B cell (primary cell): ENCODE measurements at regions of chr2 and their contacts with region 1.

Region 1: GRCh38 chr2:22340716-22341115 is 1044.3 kb upstream of the KLHL29 start:
- DNase-seq: no peak
- ATAC-seq: no peak
- H3K4me3 ChIP-seq: no peak overlapping the region
- H3K4me3 Mint-ChIP-seq: no peak overlapping the region
- H3K27ac ChIP-seq: no peak overlapping the region
- H3K27ac Mint-ChIP-seq: no peak overlapping the region
- H3K4me1 ChIP-seq: no peaks in the 10 kb centered on the region
- H3K4me1 Mint-ChIP-seq: no peaks in the 10 kb centered on the region
- H3K27me3 ChIP-seq: no peaks in the 10 kb centered on the region
- H3K27me3 Mint-ChIP-seq: no peaks in the 10 kb centered on the region
- CTCF ChIP-seq: no peak

Region 2: GRCh38 chr2:22329211-22330154 is 11.2 kb before region 1 on chr2:
- CTCF ChIA-PET with region 1: no interaction called
- POLR2A ChIA-PET with region 1: no interaction called
- intact Hi-C with region 1: no loop called
- DNase-seq: no peak
- ATAC-seq: no peak
- H3K4me3 ChIP-seq: no peak overlapping the region
- H3K4me3 Mint-ChIP-seq: no peak overlapping the region
- H3K27ac ChIP-seq: no peak overlapping the region
- H3K27ac Mint-ChIP-seq: no peak overlapping the region
- H3K4me1 ChIP-seq: no peaks in the 10 kb centered on the region
- H3K4me1 Mint-ChIP-seq: no peaks in the 10 kb centered on the region
- H3K27me3 ChIP-seq: no peaks in the 10 kb centered on the region
- H3K27me3 Mint-ChIP-seq: no peaks in the 10 kb centered on the region
- CTCF ChIP-seq: no peak

Region 3: DNA sequence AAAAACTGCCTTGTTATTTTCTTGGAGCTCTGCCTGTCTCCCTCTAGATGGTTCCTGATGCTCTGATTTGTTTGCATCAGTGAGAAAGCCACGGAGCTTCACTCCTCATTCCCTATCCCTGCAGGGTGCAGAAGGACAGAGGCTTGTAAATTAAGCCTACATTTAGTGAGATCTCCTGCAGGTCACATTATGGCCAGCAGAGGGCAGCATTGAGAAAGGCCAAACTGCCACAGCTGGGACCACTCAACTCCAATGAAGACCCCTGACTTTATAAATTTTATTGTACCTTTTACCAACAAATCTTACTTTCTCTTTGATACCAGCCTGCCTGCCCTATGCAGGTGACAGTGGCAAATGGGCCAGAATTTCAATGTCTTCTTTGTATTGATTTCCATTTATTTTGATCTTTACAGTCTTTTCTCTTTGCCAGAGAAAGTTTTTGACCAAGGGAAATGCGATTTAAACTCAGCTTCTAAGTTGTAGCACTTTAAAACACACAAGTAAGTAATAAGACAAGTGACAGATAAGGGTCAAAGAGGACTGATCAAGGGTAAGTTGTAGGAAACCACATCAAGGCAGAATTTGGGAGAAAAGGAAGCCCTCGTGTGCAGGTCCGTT is 15.2 kb after region 1 on chr2:
- CTCF ChIA-PET with region 1: interaction called, 10 read pairs
- POLR2A ChIA-PET with region 1: no interaction called
- intact Hi-C with region 1: no loop called
- DNase-seq: peak; percentile 31
- ATAC-seq: peak; percentile 31
- H3K4me3 ChIP-seq: no peak overlapping the region
- H3K4me3 Mint-ChIP-seq: no peak overlapping the region
- H3K27ac ChIP-seq: no peak overlapping the region
- H3K27ac Mint-ChIP-seq: no peak overlapping the region
- H3K4me1 ChIP-seq: no peaks in the 10 kb centered on the region
- H3K4me1 Mint-ChIP-seq: no peaks in the 10 kb centered on the region
- H3K27me3 ChIP-seq: no peaks in the 10 kb centered on the region
- H3K27me3 Mint-ChIP-seq: no peaks in the 10 kb centered on the region
- CTCF ChIP-seq: peak; percentile 90